ENCODE measurements at regions of chr10 and their contacts with region 1.

Region 1: DNA sequence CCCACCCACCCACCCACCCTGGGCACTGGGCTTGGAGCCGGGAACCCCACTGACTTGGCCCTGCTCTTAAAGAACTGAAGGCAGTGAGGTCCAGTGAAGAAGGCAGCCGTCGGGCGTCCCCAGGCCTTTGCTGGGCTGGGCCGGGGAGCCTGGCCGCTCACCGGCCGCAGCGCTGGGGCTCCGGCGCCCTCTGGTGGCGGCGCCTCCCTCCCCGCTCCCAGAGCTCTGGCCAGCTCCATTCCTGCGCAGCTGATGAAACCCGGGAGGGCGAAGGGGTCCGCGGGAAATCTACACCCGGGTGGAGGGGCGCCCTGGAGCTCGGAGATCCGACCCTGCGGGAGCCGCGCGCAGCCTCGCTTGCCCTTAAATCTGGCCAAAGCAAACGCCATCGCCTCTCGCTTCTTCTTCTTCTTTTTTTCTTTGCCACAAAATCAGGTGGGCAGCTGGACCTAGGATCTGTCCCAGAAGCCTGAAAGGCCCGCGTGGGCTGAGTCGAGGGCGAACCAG is 1.7 kb upstream of the CXCL12 start:
- DNase-seq: peak; percentile 71 to 73
- H3K4me3 ChIP-seq: no peak overlapping the region
- H3K27ac ChIP-seq: no peak overlapping the region
- H3K4me1 ChIP-seq: peaks cover 19 to 30% of the 10 kb centered on the region in 2 donors
- H3K27me3 ChIP-seq: no peaks in the 10 kb centered on the region
- CTCF ChIP-seq: peak; percentile 70 to 96 (median 93)
- POLR2A ChIP-seq: no peak

Region 2: DNA sequence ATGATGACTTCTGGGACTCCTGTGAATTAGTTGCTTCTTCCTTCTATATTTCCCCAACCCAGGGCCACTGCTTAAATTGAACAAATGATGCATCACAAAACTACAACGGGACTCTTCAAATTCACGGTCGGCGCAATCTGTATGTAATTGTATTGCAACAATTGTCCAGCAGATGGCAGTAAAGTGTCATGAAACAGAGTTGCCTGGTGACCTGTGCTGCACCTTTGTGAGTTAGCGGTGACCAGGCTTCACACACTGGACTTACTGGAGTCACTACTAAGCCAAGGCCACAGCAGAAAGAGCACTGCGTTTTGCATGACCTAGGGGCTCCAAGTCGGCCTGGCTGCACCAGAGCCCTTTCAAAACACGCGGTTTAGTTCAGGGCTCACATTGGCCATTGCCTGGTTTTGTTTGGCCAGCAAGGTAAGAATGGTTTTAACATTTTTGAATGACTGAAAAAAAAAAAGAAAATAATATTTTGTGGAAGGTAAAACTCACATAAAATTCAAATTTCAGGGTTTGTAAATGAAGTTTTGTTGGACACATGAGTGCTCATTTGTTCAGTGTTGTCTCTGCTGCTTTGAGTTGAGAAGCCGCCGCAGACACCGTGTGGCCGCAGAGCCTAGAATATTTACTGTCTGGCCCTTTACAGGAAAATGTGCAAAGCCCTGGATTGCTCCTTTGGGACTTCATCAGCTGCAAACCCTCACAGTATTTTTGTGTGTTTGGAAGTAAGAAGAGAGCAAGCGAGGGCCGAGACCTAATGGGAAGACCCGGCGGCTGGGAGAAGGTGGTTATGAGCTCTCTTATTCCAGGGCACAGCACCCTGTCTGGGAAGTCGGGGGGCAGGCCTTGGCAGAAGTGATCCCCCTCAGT is 714.7 kb before region 1 on chr10:
- intact Hi-C with region 1: loop called (anchors 2 kb)
- DNase-seq: peak; percentile 56 to 58
- H3K4me3 ChIP-seq: no peak overlapping the region
- H3K27ac ChIP-seq: no peak overlapping the region
- H3K4me1 ChIP-seq: peaks cover 10 to 13% of the 10 kb centered on the region in 2 donors
- H3K27me3 ChIP-seq: no peaks in the 10 kb centered on the region
- CTCF ChIP-seq: peak; percentile 53 to 88 (median 79)
- POLR2A ChIP-seq: no peak

Region 3: DNA sequence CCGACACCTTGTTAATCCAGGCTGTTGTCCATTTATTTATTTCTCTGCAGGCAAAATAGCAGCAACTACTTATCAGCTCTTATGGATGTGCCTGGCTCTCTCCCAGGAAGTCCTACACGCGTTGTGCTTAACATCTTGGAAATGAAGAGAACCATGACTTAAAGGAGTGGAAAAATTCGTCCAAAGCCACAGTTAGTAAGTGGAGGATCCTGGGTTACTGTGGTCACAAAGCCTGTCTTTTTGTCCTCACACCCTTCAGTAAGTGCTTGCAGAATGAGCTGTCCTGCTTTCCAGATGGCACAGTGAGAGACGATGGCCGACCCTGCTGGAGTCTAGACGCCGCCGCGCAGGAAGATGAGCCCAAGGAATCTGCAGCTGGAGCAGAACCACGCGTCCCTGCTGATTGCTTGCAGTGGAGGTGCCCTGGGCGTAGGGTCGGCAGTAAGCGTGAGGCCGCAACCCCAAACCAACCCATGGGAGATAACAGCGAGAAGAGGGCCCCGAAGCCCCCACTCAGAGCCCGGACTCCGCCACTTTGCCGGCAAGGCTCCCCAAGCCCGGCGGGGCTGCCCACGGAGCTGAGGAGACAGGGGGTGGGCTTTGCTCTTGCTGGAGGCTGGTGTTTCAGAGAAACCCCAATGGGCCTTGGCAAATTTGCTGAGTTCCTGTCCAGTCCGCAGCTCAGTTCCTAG is 180.3 kb before region 1 on chr10:
- intact Hi-C with region 1: no loop called
- DNase-seq: peak; percentile 47 to 58
- H3K4me3 ChIP-seq: no peak overlapping the region
- H3K27ac ChIP-seq: no peak overlapping the region
- H3K4me1 ChIP-seq: peaks cover 0 to 4% of the 10 kb centered on the region in 2 donors
- H3K27me3 ChIP-seq: no peaks in the 10 kb centered on the region
- CTCF ChIP-seq: no peak
- POLR2A ChIP-seq: no peak